ENCODE measurements at regions of chr17 and their contacts with region 1.

Region 1: GRCh38 chr17:7004398-7005253 is 7.8 kb upstream of the RNASEK start:
- DNase-seq: no peak
- ATAC-seq: peak; percentile 86 to 96 (median 88)
- H3K4me3 ChIP-seq: no peak overlapping the region
- H3K27ac ChIP-seq: no peak overlapping the region
- H3K4me1 ChIP-seq: no peaks in the 10 kb centered on the region
- H3K27me3 ChIP-seq: no peaks in the 10 kb centered on the region
- CTCF ChIP-seq: peak; percentile 70 to 84 (median 74)
- POLR2A ChIP-seq: no peak

Region 2: DNA sequence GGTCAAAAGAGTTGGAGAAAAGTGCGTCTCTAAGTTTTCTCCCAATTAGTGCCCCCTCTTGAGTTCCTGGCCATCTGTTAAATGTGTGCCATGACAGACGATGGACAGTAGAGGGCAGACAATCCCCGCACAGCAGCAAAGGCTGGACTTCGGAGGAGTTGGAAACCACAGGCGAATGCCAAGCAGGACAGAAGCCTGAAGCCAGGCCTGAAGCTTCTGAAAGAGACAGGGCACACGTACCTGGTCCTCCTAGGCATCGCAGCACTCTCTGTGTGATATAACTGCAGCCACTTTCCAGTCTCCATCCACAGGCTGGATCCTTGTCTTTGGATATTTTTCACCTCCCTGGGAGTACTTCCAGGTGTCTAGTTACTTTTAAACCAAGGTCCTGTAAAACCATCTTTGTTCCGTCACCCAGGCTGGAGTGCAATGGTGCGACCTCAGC is 338.5 kb before region 1 on chr17:
- intact Hi-C with region 1: loop called in 1 of 2 experiments (anchors 10 kb)
- DNase-seq: peak; percentile 66 to 81 (median 79)
- ATAC-seq: peak; percentile 97 to 100 (median 98)
- H3K4me3 ChIP-seq: no peak overlapping the region
- H3K27ac ChIP-seq: no peak overlapping the region
- H3K4me1 ChIP-seq: peaks cover 0 to 13% (median 0%) of the 10 kb centered on the region in 4 donors
- H3K27me3 ChIP-seq: no peaks in the 10 kb centered on the region
- CTCF ChIP-seq: peak; percentile 86 to 90 (median 88)
- POLR2A ChIP-seq: no peak

Region 3: DNA sequence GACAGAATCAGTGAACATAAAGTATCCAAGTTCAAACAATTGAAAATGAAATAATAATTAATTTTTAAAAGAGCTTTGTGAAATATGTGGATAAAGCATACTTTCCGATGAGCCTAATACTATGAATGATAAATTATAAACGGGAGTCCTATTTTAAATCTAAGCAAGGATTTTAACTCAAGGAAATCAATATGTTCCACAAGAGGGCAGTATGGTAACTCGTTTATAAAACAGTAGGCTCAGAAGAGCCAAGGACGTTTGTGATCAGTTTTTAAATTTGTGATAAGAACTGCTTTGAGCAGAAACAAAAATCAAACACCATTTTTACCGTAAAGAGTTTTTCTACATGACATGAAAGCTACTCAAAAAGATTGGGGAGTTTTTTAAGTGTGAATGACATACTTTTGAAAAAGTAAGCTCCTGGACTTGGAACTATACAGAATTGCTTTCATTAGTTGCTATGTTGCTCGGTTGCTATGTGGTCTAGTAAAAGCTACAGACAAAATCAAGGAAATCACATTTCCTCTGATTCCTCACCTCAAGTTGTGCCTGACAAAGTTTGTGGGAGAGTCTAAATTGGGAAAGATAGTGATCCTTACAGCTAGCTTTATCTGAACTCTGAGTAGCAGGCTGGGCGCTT is 161.3 kb before region 1 on chr17:
- intact Hi-C with region 1: loop called in 1 of 2 experiments (anchors 5 kb)
- DNase-seq: no peak
- ATAC-seq: peak; percentile 64 to 85 (median 79)
- H3K4me3 ChIP-seq: no peak overlapping the region
- H3K27ac ChIP-seq: no peak overlapping the region
- H3K4me1 ChIP-seq: no peaks in the 10 kb centered on the region
- H3K27me3 ChIP-seq: no peaks in the 10 kb centered on the region
- CTCF ChIP-seq: peak; percentile 53 to 67 (median 58)
- POLR2A ChIP-seq: no peak

Region 4: GRCh38 chr17:6913608-6914443 is 90.8 kb before region 1 on chr17:
- intact Hi-C with region 1: loop called (anchors 5 to 10 kb)
- DNase-seq: peak; percentile 65 to 71 (median 68)
- ATAC-seq: peak; percentile 76 to 86 (median 82)
- H3K4me3 ChIP-seq: no peak overlapping the region
- H3K27ac ChIP-seq: no peak overlapping the region
- H3K4me1 ChIP-seq: no peaks in the 10 kb centered on the region
- H3K27me3 ChIP-seq: no peaks in the 10 kb centered on the region
- CTCF ChIP-seq: peak; percentile 65 to 75 (median 66)
- POLR2A ChIP-seq: no peak

Region 5: GRCh38 chr17:6948562-6948961 is 56.1 kb before region 1 on chr17:
- intact Hi-C with region 1: no loop called
- DNase-seq: no peak
- ATAC-seq: peak in 3 of 4 donors; percentile 22 to 32 (median 26)
- H3K4me3 ChIP-seq: no peak overlapping the region
- H3K27ac ChIP-seq: no peak overlapping the region
- H3K4me1 ChIP-seq: no peaks in the 10 kb centered on the region
- H3K27me3 ChIP-seq: no peaks in the 10 kb centered on the region
- CTCF ChIP-seq: no peak
- POLR2A ChIP-seq: no peak

Region 6: GRCh38 chr17:6969323-6969726 is 35.3 kb before region 1 on chr17:
- intact Hi-C with region 1: no loop called
- DNase-seq: no peak
- ATAC-seq: no peak
- H3K4me3 ChIP-seq: no peak overlapping the region
- H3K27ac ChIP-seq: no peak overlapping the region
- H3K4me1 ChIP-seq: no peaks in the 10 kb centered on the region
- H3K27me3 ChIP-seq: no peaks in the 10 kb centered on the region
- CTCF ChIP-seq: no peak
- POLR2A ChIP-seq: no peak

Measured in right lobe of liver (tissue), 6 donors.